Breast epithelium (tissue), 4 donors: ENCODE measurements at regions of chr3 and their contacts with region 1.

Region 1: DNA sequence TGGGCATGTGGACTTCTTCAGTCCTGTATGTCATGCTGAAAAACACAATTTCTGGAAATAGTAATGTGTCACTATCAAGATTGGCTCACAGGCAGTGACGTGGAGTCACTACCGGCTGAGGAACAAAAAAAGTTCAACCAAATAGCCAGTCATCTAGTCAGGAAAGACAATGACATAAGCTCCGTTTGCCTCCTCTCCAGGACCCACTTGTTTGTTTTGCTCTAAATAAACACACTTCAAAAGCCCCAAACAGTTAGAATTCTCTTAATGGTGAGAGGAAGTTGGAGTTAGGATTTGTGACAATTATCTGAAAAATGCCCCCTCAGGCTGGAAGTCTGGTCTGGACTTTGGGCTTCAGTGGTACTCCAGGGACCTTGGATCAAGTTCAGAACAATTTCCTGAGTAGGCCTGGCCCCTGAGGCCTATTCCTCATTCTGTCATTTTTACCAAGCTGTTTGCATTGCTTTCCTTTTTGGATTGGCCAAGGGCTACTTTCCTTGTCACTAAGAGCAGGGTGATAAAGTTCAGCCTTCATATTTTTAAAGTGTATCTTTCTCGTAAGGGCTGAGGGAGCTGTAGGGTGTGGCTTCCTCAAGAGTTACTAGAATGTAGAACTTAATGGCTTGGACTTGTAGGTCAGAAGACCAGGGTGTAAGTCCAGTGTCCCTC is 98.9 kb downstream of the EOMES start:
- DNase-seq: no peak
- H3K4me3 ChIP-seq: no peak overlapping the region
- H3K27ac ChIP-seq: peak overlapping the region in 1 of 2 donors; percentile 38
- H3K4me1 ChIP-seq: no peaks in the 10 kb centered on the region
- H3K27me3 ChIP-seq: no peaks in the 10 kb centered on the region
- CTCF ChIP-seq: no peak
- POLR2A ChIP-seq: no peak

Region 2: GRCh38 chr3:27637346-27638000 is 14.3 kb after region 1 on chr3:
- intact Hi-C with region 1: loop called (anchors 2 kb)
- DNase-seq: no peak
- H3K4me3 ChIP-seq: no peak overlapping the region
- H3K27ac ChIP-seq: no peak overlapping the region
- H3K4me1 ChIP-seq: no peaks in the 10 kb centered on the region
- H3K27me3 ChIP-seq: no peaks in the 10 kb centered on the region
- CTCF ChIP-seq: no peak
- POLR2A ChIP-seq: no peak

Region 3: GRCh38 chr3:28018925-28019718 is 395.9 kb after region 1 on chr3:
- intact Hi-C with region 1: no loop called
- DNase-seq: no peak
- H3K4me3 ChIP-seq: no peak overlapping the region
- H3K27ac ChIP-seq: no peak overlapping the region
- H3K4me1 ChIP-seq: no peaks in the 10 kb centered on the region
- H3K27me3 ChIP-seq: no peaks in the 10 kb centered on the region
- CTCF ChIP-seq: no peak
- POLR2A ChIP-seq: no peak